Activated T-helper 1 cell treated with anti-CD3 and anti-CD28 coated beads, Interleukin-12 subunit alpha, Interleukin-12 subunit beta, Interleukin-2, Interleukin-4 antibody, amounts not matched to agents 30 ng/mL and 10 ng/mL and 1 ng/mL, durations not matched to agents 14 hours and 24 hours and 36 hours (primary cell): ENCODE measurements at regions of chr15 and their contacts with region 1.

Region 1: GRCh38 chr15:84981054-84981710 is 474 bp upstream of the PDE8A start:
- DNase-seq: peak; percentile 96
- H3K4me3 Mint-ChIP-seq: peak overlapping the region; percentile 95
- H3K27ac Mint-ChIP-seq: peak overlapping the region; percentile 93
- H3K4me1 Mint-ChIP-seq: peaks cover 40% of the 10 kb centered on the region
- H3K27me3 Mint-ChIP-seq: peaks cover 18% of the 10 kb centered on the region

Region 2: DNA sequence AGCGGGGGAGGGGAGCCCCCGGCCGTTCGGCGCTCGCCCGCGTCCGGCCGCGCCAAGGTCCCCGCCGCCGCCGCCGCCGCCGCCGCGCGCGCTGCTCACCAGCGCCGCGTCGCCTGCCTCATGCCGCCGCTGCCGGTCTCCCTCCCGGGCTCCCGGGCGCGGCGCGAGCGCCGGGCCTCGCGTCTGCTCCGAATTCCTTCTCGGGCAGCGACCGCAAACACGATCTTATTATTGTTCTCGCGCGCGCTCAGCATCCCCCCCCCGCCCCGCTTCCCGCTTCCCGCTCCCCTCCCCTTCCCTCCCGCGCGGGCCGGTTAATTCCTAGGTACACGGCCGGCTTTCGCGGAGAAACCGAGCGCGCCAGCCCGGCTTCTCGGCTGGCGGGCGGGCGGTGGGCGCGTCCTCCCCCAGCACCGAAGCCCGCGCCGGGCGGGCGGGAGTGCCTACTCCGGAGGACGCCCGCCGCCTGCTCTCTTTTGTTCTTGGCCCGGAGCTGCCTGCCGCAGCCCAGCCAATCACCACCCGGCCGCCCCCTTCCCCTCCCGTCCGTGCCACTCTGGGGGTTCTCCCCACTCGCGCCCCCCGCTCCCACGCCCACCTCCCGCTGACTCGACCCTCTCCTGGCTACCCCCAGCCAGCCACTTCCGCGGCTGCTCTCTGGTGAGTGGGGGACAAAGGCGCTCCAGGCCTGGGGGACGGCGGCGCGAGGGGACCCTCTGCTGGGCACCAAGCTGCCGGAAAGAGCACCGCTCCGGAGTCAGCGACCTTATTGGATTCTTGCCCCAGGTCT is 1773.4 kb before region 1 on chr15 and contains the start of gene HDGFL3:
- intact Hi-C with region 1: loop called (anchors 10 kb)
- DNase-seq: peak; percentile 38
- H3K4me3 Mint-ChIP-seq: peak within 1 kb of the TSS; percentile 96
- H3K27ac Mint-ChIP-seq: no peak within 1 kb of the TSS
- H3K4me1 Mint-ChIP-seq: peaks cover 27% of the 10 kb centered on the region
- H3K27me3 Mint-ChIP-seq: peaks cover 11% of the 10 kb centered on the region
- total RNA-seq, gene HDGFL3: 54.7 and 57.5 TPM in 2 replicates

Region 3: DNA sequence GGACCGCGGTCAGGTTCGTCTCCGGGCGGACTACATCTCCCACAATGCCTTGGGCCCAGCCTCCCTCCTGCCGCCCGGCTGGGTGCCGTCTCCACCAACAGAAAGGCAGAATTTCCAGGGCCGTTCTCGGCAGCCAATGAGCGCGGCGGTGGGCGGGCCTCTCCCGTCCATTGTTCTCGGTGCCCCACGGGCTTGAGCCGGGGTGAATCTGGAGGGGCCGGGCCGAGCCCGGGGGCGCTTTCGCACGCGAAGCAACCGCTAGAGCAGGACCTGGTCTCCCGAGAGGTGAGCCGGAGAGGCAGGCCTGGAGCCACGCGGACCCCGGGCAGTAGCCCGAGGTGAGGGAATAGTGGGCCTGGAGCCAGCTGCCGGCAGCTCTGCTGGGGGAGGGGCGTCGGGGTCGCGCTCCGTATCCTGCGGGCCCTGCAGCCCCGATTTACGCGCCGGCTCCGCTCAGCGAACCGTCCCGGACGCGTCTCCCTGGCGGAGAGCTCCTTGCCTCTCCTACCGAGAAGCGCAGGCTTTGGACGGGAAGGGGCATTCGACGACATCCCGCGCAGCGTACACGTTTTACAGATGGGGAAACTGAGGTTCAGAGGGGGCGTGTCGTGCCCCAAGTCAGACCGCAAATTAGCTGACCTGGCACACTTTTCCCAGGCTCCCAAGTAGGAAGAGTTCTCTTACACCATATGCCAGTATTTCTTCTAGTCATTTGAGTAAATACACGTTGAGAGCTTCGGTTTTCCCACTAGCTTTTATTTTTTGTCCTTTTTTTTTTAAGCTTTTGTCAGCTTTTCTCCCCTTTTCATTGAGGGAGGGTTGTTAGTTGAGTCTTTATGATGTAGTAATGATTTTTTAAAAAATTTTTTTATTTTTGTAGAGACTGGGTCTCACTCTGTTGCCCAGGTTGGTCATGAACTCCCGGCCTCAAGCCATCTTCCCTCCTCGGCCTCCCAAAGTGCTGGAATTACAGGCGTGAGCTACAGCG is 380.0 kb before region 1 on chr15 and contains the start of gene ZSCAN2:
- intact Hi-C with region 1: loop called (anchors 1 kb)
- DNase-seq: peak; percentile 92
- H3K4me3 Mint-ChIP-seq: peak within 1 kb of the TSS; percentile 89
- H3K27ac Mint-ChIP-seq: peak within 1 kb of the TSS; percentile 72
- H3K4me1 Mint-ChIP-seq: peaks cover 59% of the 10 kb centered on the region
- H3K27me3 Mint-ChIP-seq: no peaks in the 10 kb centered on the region
- total RNA-seq, gene ZSCAN2: 6.5 and 7.0 TPM in 2 replicates

Region 4: DNA sequence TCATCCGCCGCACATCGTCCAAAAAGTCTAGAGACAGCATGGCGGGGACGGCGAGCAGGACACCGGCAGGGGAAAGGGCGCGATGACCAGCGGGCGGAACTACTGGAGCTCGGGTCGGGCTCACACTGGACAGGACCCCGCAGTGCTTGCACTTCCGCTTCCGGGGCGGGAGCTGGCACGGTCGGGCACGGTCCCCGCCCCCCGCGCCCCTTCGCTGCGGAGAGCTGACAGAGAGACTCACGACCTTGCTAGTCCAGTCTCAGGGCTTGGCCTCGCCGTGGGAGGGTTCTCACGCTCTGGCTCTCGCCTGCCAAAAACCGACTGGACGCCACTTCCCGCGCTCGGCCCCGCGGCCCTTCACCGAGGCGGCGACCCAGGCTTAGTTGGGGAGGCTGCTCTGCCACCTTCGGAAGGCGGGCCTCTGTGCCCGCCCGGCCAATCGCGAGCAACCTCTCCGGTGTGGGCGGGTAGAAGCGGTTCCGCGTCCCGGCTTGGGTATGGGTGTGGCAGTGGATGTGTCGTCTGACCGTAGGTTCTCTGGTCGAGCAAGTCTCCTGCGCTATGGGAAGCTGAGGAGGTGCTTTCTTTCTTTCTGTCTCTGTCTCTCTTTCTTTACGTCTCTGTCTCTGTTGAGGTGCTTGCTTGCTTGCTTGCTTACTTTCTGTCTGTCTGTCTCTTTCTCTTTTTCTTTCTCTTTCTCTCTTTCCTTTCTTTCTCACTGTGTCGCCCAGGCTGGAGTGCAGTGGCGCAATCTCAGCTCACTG is 265.0 kb before region 1 on chr15 and contains the start of gene SEC11A:
- intact Hi-C with region 1: loop called (anchors 2 kb)
- DNase-seq: peak; percentile 91
- H3K4me3 Mint-ChIP-seq: peak within 1 kb of the TSS; percentile 94
- H3K27ac Mint-ChIP-seq: peak within 1 kb of the TSS; percentile 96
- H3K4me1 Mint-ChIP-seq: peaks cover 59% of the 10 kb centered on the region
- H3K27me3 Mint-ChIP-seq: no peaks in the 10 kb centered on the region
- total RNA-seq, gene SEC11A: 97.3 and 105 TPM in 2 replicates

Region 5: GRCh38 chr15:84934941-84935729 is 46.0 kb before region 1 on chr15:
- intact Hi-C with region 1: no loop called
- DNase-seq: no peak
- H3K4me3 Mint-ChIP-seq: no peak overlapping the region
- H3K27ac Mint-ChIP-seq: no peak overlapping the region
- H3K4me1 Mint-ChIP-seq: peaks cover 4% of the 10 kb centered on the region
- H3K27me3 Mint-ChIP-seq: peaks cover 5% of the 10 kb centered on the region

Region 6: GRCh38 chr15:84992157-84992944 is 11.2 kb after region 1 on chr15:
- intact Hi-C with region 1: loop called (anchors 1 kb)
- DNase-seq: no peak
- H3K4me3 Mint-ChIP-seq: peak overlapping the region; percentile 40
- H3K27ac Mint-ChIP-seq: peak overlapping the region; percentile 54
- H3K4me1 Mint-ChIP-seq: peaks cover 44% of the 10 kb centered on the region
- H3K27me3 Mint-ChIP-seq: no peaks in the 10 kb centered on the region

Region 7: GRCh38 chr15:85168642-85169173 is 187.5 kb after region 1 on chr15:
- intact Hi-C with region 1: loop called (anchors 10 kb)
- DNase-seq: no peak
- H3K4me3 Mint-ChIP-seq: no peak overlapping the region
- H3K27ac Mint-ChIP-seq: no peak overlapping the region
- H3K4me1 Mint-ChIP-seq: peaks cover 4% of the 10 kb centered on the region
- H3K27me3 Mint-ChIP-seq: peaks cover 36% of the 10 kb centered on the region